Activated CD8-positive, alpha-beta T cell treated with anti-CD3 and anti-CD28 coated beads, Interleukin-2, amount 10 ng/mL, durations not matched to agents 7 days and 5 days (primary cell): ENCODE measurements at regions of chr5 and their contacts with region 1.

Region 1: DNA sequence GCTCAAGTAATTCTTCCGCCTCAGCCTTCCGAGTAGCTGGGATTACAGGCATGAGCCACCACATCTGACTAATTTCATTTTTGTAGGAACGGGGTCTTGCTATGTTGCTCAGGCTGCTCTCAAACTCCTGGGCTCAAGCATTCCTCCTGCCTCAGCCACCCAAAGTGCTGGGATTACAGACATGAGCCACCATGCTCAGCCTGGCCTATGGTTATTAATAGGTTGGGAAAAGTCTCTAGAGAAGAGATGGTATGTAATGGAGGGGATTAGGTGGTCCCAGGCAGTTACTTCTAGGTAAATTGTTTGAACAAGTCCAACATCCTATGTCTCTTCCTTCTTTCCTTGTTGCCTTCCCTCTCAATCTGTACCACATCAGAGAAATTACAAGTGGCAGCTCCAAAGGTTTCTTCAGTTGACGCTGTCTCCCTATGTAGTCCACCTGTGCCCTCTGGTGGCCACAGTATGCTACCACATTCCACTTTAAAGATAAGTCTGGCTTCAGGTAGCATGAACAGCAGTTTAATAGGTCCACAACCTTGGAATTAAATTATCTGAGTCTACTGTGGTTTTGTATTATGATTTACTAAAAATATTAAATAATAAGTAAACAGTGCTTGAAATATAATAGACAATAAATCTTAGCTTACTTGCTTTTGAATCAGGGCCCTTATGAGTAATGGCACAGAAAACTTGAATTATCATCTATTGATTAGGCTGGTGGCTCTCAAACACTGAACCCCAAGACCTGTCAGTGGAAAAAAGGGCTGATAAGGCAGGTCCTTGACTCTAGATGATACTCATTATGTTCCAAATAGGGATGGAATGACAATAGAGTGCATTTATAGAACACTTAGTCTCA is 9.7 kb downstream of the TIGD6 start:
- DNase-seq: peak; percentile 80
- ATAC-seq: peak; percentile 85
- H3K4me3 Mint-ChIP-seq: no peak overlapping the region
- H3K27ac Mint-ChIP-seq: no peak overlapping the region
- H3K4me1 Mint-ChIP-seq: peaks cover 2% of the 10 kb centered on the region
- H3K27me3 Mint-ChIP-seq: no peaks in the 10 kb centered on the region

Region 2: DNA sequence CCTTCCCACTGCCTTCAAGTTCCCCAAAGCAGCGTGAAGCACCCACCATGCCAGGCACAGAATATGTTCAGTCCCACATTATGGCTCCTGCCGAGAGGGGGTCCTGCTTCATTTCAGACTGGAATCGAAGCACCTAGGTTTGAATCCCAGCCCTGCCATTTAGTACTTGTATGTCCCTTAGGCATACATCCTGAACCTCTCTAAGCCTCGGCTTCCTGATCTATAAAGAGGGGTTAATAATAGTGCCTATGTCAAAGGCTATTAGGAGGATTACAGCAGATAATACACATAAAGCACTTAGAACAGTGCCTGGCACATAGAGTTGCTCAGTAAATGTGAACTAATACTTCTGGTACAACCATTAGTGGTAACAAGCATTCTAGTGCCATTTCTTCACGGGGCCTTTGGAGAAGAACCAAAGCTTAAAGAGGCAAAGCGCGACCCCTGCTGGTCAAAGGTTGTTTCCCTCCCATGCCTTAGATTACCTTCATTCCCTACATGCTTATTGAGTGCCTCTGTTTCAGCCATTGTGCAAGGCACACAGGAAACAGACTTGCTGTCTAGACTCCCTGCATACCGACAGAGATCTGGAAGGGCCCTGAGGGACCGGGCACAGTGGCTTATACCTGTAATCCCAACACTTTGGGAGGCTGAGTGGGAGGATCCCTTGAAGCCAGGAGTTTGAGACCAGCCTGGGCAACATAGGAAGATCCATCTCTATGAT is 162.4 kb before region 1 on chr5:
- CTCF ChIA-PET with region 1: interaction called, 155 read pairs
- POLR2A ChIA-PET with region 1: no interaction called
- DNase-seq: peak; percentile 89
- ATAC-seq: peak; percentile 71
- H3K4me3 Mint-ChIP-seq: no peak overlapping the region
- H3K27ac Mint-ChIP-seq: no peak overlapping the region
- H3K4me1 Mint-ChIP-seq: peaks cover 5% of the 10 kb centered on the region
- H3K27me3 Mint-ChIP-seq: no peaks in the 10 kb centered on the region

Region 3: DNA sequence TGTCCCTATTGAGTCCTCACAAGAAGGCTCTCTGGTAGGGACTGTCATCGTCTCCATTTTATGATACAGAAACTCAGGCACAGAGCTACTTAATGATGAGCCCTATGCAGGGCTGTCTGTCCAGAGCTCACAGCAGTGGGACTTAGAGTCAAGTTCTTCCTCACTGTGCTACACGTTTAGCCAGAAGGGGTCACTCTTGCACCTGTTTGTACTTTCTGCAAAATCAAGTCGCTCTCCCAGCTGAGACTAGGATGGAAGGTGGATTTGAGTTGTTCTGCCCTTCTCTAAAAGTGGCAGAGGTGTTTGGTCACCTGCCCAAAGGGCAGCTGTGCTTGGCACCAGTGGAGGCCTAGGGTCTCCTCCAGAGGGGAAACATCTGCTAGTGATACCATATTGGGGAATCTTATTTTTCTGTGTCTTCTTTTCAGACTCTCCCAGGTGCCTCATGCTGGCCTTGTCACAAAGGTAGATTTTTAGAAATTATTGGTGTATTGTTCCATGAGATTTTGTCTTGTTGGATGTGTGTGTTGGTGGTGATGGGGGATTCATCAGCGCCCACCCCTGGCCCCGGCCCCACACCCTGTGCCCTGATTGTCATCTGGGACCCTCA is 156.4 kb before region 1 on chr5:
- CTCF ChIA-PET with region 1: interaction called, 155 read pairs
- POLR2A ChIA-PET with region 1: interaction called, 3 read pairs
- DNase-seq: peak; percentile 73
- ATAC-seq: peak; percentile 48
- H3K4me3 Mint-ChIP-seq: no peak overlapping the region
- H3K27ac Mint-ChIP-seq: no peak overlapping the region
- H3K4me1 Mint-ChIP-seq: peaks cover 5% of the 10 kb centered on the region
- H3K27me3 Mint-ChIP-seq: no peaks in the 10 kb centered on the region

Region 4: GRCh38 chr5:149852641-149853330 is 138.0 kb before region 1 on chr5:
- CTCF ChIA-PET with region 1: interaction called, 18 read pairs
- POLR2A ChIA-PET with region 1: no interaction called
- DNase-seq: peak; percentile 59
- ATAC-seq: peak; percentile 73
- H3K4me3 Mint-ChIP-seq: no peak overlapping the region
- H3K27ac Mint-ChIP-seq: no peak overlapping the region
- H3K4me1 Mint-ChIP-seq: no peaks in the 10 kb centered on the region
- H3K27me3 Mint-ChIP-seq: no peaks in the 10 kb centered on the region

Region 5: GRCh38 chr5:149960272-149961185 is 30.2 kb before region 1 on chr5 and contains the start of gene SLC26A2:
- CTCF ChIA-PET with region 1: interaction called, 56 read pairs
- POLR2A ChIA-PET with region 1: no interaction called
- DNase-seq: peak; percentile 97
- ATAC-seq: peak; percentile 100
- H3K4me3 Mint-ChIP-seq: peak within 1 kb of the TSS; percentile 85
- H3K27ac Mint-ChIP-seq: peak within 1 kb of the TSS; percentile 93
- H3K4me1 Mint-ChIP-seq: peaks cover 35% of the 10 kb centered on the region
- H3K27me3 Mint-ChIP-seq: no peaks in the 10 kb centered on the region
- total RNA-seq, gene SLC26A2: 7.6 to 8.0 TPM

Region 6: DNA sequence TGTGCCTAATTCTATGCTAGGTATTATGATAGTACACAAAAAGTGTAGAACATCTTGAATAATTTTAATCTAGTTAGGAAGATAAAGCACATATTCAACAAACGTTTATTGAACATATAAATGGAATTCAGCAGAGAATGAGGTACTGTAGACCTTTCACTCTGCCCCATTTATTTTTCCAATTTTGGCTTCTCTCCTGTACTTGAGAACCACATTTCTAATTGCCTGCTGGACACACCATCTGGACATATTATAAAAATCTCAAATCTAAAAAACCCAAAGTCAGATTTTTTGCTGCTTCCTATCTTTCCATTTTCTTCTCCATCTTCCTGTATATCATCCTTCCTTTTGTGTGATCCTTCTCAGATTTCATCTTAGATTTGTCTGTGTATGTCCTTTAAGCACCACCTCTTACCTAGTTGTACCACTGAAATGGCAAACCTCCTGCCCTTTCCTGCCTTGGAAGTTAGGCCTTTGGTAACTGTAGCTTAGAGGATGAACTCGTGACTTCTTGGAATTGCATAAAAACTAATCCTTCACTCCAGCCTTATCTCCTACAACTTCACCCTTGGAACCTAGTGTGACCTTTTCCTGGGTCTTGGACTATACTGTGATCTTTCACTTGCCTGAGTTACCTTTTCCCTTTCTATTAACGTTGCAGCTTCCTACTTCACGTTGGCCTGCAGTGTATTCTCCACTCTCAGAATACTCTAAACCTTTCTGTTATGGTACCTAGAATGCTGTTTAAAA is 21.4 kb before region 1 on chr5:
- CTCF ChIA-PET with region 1: interaction called, 10 read pairs
- POLR2A ChIA-PET with region 1: no interaction called
- DNase-seq: no peak
- ATAC-seq: no peak
- H3K4me3 Mint-ChIP-seq: no peak overlapping the region
- H3K27ac Mint-ChIP-seq: no peak overlapping the region
- H3K4me1 Mint-ChIP-seq: no peaks in the 10 kb centered on the region
- H3K27me3 Mint-ChIP-seq: no peaks in the 10 kb centered on the region

Region 7: GRCh38 chr5:149979896-149980295 is 10.9 kb before region 1 on chr5:
- CTCF ChIA-PET with region 1: interaction called, 22 read pairs
- POLR2A ChIA-PET with region 1: no interaction called
- DNase-seq: no peak
- ATAC-seq: no peak
- H3K4me3 Mint-ChIP-seq: no peak overlapping the region
- H3K27ac Mint-ChIP-seq: no peak overlapping the region
- H3K4me1 Mint-ChIP-seq: no peaks in the 10 kb centered on the region
- H3K27me3 Mint-ChIP-seq: no peaks in the 10 kb centered on the region